ENCODE measurements at regions of chr3 and their contacts with region 1.

Region 1: DNA sequence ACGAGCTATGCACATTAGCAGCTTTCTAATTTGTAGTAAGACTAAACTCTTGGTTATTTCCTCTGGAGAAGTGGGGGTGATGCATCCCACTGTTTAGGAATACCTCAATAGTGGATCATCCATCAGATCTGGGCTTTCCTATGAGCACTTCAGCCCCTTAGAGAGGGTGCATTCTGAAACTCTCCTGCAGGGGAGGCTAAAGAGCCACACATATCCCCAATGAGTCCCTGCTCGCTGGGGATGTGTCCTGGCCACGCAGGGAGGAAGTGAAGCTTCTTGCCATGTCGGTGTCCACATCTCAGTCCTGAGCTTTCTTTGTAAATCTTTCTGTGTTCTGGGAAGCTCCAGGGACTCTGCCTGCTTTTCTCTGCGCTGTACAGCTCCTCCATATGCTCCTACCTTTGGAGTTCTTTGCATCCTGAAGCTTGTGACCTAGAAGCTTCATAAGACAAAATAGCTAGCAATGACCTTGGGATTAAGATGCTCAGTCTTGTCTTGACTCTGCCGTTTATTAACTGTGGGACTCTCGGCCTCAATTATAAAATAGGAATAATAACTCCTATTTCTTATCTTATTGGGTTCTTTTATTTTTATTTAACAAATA is 28.3 kb upstream of the MASP1 start:
- DNase-seq: peak; percentile 35 to 56 (median 44)
- H3K4me3 ChIP-seq: no peak overlapping the region
- H3K4me3 Mint-ChIP-seq: peak overlapping the region in 1 of 8 donors; percentile 36
- H3K27ac ChIP-seq: no peak overlapping the region
- H3K27ac Mint-ChIP-seq: no peak overlapping the region
- H3K4me1 ChIP-seq: peaks cover 15% of the 10 kb centered on the region
- H3K4me1 Mint-ChIP-seq: peaks cover 9 to 17% (median 14%) of the 10 kb centered on the region in 4 donors
- H3K27me3 ChIP-seq: no peaks in the 10 kb centered on the region
- H3K27me3 Mint-ChIP-seq: peaks cover 21 to 35% of the 10 kb centered on the region in 2 donors

Region 2: DNA sequence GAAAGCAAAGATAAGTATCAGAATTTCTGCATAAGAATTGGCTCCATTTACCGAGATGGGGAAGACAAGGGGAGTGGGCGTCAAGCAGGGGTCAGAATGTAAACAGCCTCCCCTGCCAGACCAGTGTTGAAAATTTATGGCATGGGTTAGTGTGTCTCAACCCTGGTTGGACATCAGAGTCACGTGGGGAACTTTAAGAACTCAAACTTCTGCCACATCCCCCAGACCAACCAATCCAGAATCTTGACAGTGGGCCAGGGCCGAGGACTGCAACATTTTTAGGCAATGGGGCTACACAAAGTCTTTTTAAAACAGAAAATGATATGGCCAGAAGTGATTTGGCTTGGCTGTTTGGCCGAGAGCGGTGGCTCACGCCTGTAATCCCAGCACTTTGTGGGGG is 13.9 kb before region 1 on chr3:
- CTCF ChIA-PET with region 1: interaction called, 51 read pairs
- POLR2A ChIA-PET with region 1: no interaction called
- intact Hi-C with region 1: no loop called
- DNase-seq: no peak
- H3K4me3 ChIP-seq: no peak overlapping the region
- H3K4me3 Mint-ChIP-seq: no peak overlapping the region
- H3K27ac ChIP-seq: no peak overlapping the region
- H3K27ac Mint-ChIP-seq: no peak overlapping the region
- H3K4me1 ChIP-seq: no peaks in the 10 kb centered on the region
- H3K4me1 Mint-ChIP-seq: peaks cover 0 to 2% (median 0%) of the 10 kb centered on the region in 4 donors
- H3K27me3 ChIP-seq: no peaks in the 10 kb centered on the region
- H3K27me3 Mint-ChIP-seq: peaks cover 13 to 21% of the 10 kb centered on the region in 2 donors

Region 3: DNA sequence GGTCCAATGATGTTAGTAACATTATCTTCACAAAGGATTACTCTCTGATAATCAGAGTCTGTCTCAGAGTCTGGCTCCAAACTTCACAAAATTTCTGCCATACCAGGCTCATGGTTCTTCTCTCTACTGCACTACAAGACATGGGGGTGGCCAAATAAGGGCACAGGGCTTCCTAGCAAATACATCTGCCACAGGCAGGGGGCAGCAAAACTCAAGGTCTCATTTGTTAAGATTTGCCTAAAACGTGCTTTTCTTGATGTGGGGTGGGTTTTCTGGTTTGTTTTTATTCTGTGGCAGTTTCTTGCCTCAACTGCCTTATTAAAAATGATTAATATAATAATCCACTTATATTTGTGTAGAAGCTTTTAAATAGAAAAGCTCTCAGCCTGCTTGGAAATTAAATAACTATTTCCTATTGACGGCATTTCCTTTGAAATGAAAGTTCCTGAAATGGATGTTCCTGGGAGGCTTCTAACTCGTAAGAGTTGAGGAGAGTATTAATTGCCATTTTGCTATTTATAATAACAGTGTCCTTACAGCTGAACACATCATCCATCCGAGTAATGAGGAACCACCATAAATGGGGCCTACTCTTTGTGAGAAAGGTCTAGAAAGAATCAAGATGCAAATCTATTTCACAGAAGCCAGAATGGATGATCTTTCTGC is 296.6 kb after region 1 on chr3:
- CTCF ChIA-PET with region 1: interaction called, 14 read pairs
- POLR2A ChIA-PET with region 1: no interaction called
- intact Hi-C with region 1: loop called (anchors 2 kb)
- DNase-seq: peak; percentile 21 to 38 (median 36)
- H3K4me3 ChIP-seq: no peak overlapping the region
- H3K4me3 Mint-ChIP-seq: no peak overlapping the region
- H3K27ac ChIP-seq: no peak overlapping the region
- H3K27ac Mint-ChIP-seq: no peak overlapping the region
- H3K4me1 ChIP-seq: no peaks in the 10 kb centered on the region
- H3K4me1 Mint-ChIP-seq: peaks cover 0 to 4% (median under 1%) of the 10 kb centered on the region in 4 donors
- H3K27me3 ChIP-seq: no peaks in the 10 kb centered on the region
- H3K27me3 Mint-ChIP-seq: peaks cover 5 to 11% of the 10 kb centered on the region in 2 donors

Region 4: GRCh38 chr3:187679638-187680396 is 360.0 kb after region 1 on chr3:
- CTCF ChIA-PET with region 1: interaction called, 464 read pairs
- POLR2A ChIA-PET with region 1: interaction called, 10 read pairs
- intact Hi-C with region 1: loop called (anchors 1 kb)
- DNase-seq: peak; percentile 37 to 63 (median 54)
- H3K4me3 ChIP-seq: no peak overlapping the region
- H3K4me3 Mint-ChIP-seq: no peak overlapping the region
- H3K27ac ChIP-seq: no peak overlapping the region
- H3K27ac Mint-ChIP-seq: no peak overlapping the region
- H3K4me1 ChIP-seq: no peaks in the 10 kb centered on the region
- H3K4me1 Mint-ChIP-seq: peaks cover 0 to 2% (median 0%) of the 10 kb centered on the region in 4 donors
- H3K27me3 ChIP-seq: no peaks in the 10 kb centered on the region
- H3K27me3 Mint-ChIP-seq: peaks cover 29 to 43% of the 10 kb centered on the region in 2 donors

Region 5: GRCh38 chr3:187702507-187703033 is 382.8 kb after region 1 on chr3 and contains the start of gene RTP2:
- CTCF ChIA-PET with region 1: interaction called, 50 read pairs
- POLR2A ChIA-PET with region 1: no interaction called
- intact Hi-C with region 1: no loop called
- DNase-seq: no peak
- H3K4me3 ChIP-seq: no peak within 1 kb of the TSS
- H3K4me3 Mint-ChIP-seq: no peak within 1 kb of the TSS
- H3K27ac ChIP-seq: no peak within 1 kb of the TSS
- H3K27ac Mint-ChIP-seq: no peak within 1 kb of the TSS
- H3K4me1 ChIP-seq: no peaks in the 10 kb centered on the region
- H3K4me1 Mint-ChIP-seq: no peaks in the 10 kb centered on the region
- H3K27me3 ChIP-seq: no peaks in the 10 kb centered on the region
- H3K27me3 Mint-ChIP-seq: peaks cover 0 to under 1% of the 10 kb centered on the region in 2 donors
- total RNA-seq, gene RTP2: not detected

Region 6: DNA sequence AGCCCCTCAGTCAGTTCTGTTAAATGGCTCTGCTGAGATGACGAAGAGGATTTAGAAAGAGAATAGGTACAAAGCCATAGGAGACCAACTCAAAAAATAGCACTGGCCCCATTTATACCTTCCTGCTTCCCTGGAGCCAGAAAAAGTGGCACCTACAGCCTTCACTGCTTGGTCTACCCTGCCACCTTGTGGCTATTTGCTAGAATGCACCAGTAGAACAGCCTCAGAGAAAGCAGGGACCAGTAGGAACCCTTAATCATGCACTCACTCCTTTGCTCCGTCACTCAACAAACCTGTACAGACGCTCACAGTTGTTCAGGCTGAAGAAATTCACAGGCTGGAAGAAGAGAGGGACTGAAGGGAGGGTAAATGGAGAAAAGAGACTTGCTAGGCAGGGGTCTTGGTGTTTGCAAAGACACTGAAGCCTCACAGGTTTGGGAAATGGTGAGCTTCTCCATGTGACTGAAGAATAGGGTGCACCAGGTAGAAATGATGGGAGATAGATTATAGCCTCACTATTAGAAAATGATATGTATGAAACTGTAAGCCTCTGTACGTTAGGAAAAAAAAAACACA is 394.7 kb after region 1 on chr3:
- CTCF ChIA-PET with region 1: interaction called, 159 read pairs
- POLR2A ChIA-PET with region 1: interaction called, 3 read pairs
- intact Hi-C with region 1: loop called (anchors 1 kb)
- DNase-seq: peak; percentile 65 to 75 (median 70)
- H3K4me3 ChIP-seq: no peak overlapping the region
- H3K4me3 Mint-ChIP-seq: peak overlapping the region in 2 of 8 donors; percentile 63 to 65
- H3K27ac ChIP-seq: no peak overlapping the region
- H3K27ac Mint-ChIP-seq: peak overlapping the region in 6 of 7 donors; percentile 13 to 61 (median 19)
- H3K4me1 ChIP-seq: peaks cover 15% of the 10 kb centered on the region
- H3K4me1 Mint-ChIP-seq: peaks cover 13 to 18% (median 17%) of the 10 kb centered on the region in 4 donors
- H3K27me3 ChIP-seq: no peaks in the 10 kb centered on the region
- H3K27me3 Mint-ChIP-seq: no peaks in the 10 kb centered on the region

Region 7: GRCh38 chr3:189148081-189148507 is 1828.3 kb after region 1 on chr3:
- CTCF ChIA-PET with region 1: interaction called, 5 read pairs
- POLR2A ChIA-PET with region 1: no interaction called
- intact Hi-C with region 1: loop called (anchors 2 kb)
- DNase-seq: peak; percentile 50 to 61 (median 60)
- H3K4me3 ChIP-seq: no peak overlapping the region
- H3K4me3 Mint-ChIP-seq: no peak overlapping the region
- H3K27ac ChIP-seq: no peak overlapping the region
- H3K27ac Mint-ChIP-seq: peak overlapping the region in 1 of 7 donors; percentile 62
- H3K4me1 ChIP-seq: peaks cover 19% of the 10 kb centered on the region
- H3K4me1 Mint-ChIP-seq: peaks cover 13 to 28% (median 21%) of the 10 kb centered on the region in 4 donors
- H3K27me3 ChIP-seq: no peaks in the 10 kb centered on the region
- H3K27me3 Mint-ChIP-seq: no peaks in the 10 kb centered on the region